OCI-LY7 (cell line): ENCODE measurements at regions of chr5 and their contacts with region 1.

Region 1: DNA sequence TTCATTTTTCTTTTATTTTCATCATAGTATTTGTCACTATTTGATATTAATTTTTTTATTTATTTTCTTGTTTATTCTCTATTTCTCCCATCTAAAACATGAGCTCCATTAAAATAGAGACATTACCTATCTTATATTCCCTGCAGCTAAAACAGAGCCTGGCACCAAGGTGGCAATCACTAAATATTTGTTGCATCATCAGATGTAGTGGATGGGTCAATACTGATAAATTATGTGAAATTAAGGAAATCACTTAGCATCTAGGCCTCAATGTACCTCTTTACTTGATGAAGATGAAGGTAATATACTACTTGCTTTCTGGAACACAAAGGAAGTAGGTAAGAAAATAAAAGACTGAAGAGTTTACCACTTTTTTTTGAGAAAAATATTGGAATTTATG is 24.6 kb downstream of the MFAP3 start:
- DNase-seq: no peak
- H3K4me3 ChIP-seq: no peak overlapping the region
- H3K27ac ChIP-seq: no peak overlapping the region
- H3K4me1 ChIP-seq: peaks cover 19% of the 10 kb centered on the region
- CTCF ChIP-seq: no peak

Region 2: DNA sequence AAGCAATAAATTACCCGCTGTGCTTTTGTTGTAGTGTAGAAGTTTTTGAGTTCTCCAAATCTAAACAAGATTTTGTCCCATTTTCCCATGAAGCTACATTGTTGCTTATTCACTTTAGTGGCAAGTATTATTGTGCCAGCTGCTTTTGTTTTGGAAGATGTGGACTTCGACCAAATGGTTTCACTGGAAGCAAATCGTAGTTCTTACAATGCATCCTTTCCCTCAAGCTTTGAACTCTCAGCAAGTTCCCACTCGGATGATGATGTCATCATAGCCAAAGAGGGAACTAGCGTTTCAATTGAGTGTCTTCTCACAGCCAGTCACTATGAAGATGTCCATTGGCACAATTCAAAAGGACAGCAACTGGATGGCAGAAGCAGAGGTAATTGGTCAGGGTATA is 13.7 kb before region 1 on chr5:
- CTCF ChIA-PET with region 1: no interaction called
- POLR2A ChIA-PET with region 1: interaction called, 19 read pairs
- intact Hi-C with region 1: no loop called
- DNase-seq: no peak
- H3K4me3 ChIP-seq: no peak overlapping the region
- H3K27ac ChIP-seq: no peak overlapping the region
- H3K4me1 ChIP-seq: no peaks in the 10 kb centered on the region
- CTCF ChIP-seq: no peak

Region 3: GRCh38 chr5:154077696-154078095 is 14.3 kb after region 1 on chr5:
- CTCF ChIA-PET with region 1: no interaction called
- POLR2A ChIA-PET with region 1: no interaction called
- intact Hi-C with region 1: no loop called
- DNase-seq: no peak
- H3K4me3 ChIP-seq: no peak overlapping the region
- H3K27ac ChIP-seq: no peak overlapping the region
- H3K4me1 ChIP-seq: no peaks in the 10 kb centered on the region
- CTCF ChIP-seq: no peak

Region 4: DNA sequence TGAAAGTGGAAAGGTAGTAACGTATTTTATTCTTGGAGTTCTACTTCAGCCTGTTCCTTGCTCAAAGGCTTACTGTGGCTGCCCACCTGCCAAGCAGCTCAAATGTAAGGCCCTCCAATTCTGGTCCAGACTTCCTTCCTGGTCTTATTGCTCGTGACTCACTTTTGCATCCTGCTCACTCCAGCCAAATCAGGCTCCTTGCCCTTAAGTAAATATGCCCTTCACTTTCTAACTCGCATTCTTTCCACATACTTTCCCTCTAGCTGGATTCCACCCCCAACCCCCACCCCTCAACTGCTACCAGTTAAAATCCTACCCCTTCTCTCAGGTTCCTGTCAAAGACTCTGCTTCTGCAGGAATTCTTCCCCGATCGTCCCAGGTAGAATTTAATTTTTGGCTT is 223.8 kb after region 1 on chr5:
- CTCF ChIA-PET with region 1: no interaction called
- POLR2A ChIA-PET with region 1: no interaction called
- intact Hi-C with region 1: no loop called
- DNase-seq: no peak
- H3K4me3 ChIP-seq: no peak overlapping the region
- H3K27ac ChIP-seq: no peak overlapping the region
- H3K4me1 ChIP-seq: no peaks in the 10 kb centered on the region
- CTCF ChIP-seq: no peak

Region 5: DNA sequence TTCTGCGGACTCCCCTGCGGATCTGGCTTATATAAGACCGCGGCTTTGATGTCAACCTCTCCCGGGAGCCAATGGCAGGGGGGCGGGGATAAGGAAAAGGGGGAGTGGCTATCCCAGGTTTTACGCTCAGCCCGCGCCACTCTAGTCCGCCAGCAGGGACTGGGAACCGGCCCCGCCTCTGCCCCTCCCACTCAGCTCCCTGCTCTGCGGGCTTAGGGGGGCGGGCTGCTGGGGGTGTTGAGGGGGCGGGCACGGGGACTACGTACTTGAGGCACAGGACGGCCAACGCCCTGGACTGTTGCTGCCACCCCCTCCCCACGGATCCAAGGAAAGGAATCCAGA is 414.8 kb after region 1 on chr5 and contains the start of gene HAND1:
- CTCF ChIA-PET with region 1: no interaction called
- POLR2A ChIA-PET with region 1: no interaction called
- intact Hi-C with region 1: no loop called
- DNase-seq: no peak
- H3K4me3 ChIP-seq: no peak within 1 kb of the TSS
- H3K27ac ChIP-seq: no peak within 1 kb of the TSS
- H3K4me1 ChIP-seq: no peaks in the 10 kb centered on the region
- CTCF ChIP-seq: no peak
- total RNA-seq, gene HAND1: not detected in 2 replicates